ENCODE measurements at regions of chr14 and their contacts with region 1.

Region 1: DNA sequence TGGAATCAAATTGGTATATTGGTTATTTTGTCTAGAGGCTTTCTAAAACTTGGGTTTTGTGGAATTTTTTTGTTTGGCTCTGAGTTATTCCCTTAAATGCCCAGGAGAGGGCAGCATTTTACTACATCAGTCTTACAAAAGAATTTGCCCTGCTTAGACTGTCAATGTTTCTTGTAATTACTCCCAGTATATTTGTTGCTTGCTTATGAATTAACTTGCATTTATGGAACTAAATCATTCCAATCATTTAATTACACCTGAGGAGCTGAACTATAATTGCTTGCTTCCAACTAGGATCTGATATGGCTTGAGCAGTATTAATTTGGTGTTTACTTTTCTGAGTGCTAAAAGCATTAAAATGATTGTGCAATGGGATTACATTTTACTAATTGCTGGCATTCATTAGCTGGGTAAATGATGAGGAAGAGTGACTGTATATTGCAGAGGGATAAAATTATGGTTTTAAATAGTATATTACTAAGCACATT is 48.7 kb downstream of the MIPOL1 start:
- DNase-seq: peak; percentile 63
- ATAC-seq: peak; percentile 68
- H3K4me3 ChIP-seq: no peak overlapping the region
- H3K27ac ChIP-seq: no peak overlapping the region
- H3K4me1 ChIP-seq: no peaks in the 10 kb centered on the region
- H3K27me3 ChIP-seq: no peaks in the 10 kb centered on the region
- CTCF ChIP-seq: peak; percentile 83
- POLR2A ChIP-seq: 0 out of 2 replicates have a peak, but pooled peaks have one; percentile 16
- RAD21 ChIP-seq: peak; percentile 84

Region 2: DNA sequence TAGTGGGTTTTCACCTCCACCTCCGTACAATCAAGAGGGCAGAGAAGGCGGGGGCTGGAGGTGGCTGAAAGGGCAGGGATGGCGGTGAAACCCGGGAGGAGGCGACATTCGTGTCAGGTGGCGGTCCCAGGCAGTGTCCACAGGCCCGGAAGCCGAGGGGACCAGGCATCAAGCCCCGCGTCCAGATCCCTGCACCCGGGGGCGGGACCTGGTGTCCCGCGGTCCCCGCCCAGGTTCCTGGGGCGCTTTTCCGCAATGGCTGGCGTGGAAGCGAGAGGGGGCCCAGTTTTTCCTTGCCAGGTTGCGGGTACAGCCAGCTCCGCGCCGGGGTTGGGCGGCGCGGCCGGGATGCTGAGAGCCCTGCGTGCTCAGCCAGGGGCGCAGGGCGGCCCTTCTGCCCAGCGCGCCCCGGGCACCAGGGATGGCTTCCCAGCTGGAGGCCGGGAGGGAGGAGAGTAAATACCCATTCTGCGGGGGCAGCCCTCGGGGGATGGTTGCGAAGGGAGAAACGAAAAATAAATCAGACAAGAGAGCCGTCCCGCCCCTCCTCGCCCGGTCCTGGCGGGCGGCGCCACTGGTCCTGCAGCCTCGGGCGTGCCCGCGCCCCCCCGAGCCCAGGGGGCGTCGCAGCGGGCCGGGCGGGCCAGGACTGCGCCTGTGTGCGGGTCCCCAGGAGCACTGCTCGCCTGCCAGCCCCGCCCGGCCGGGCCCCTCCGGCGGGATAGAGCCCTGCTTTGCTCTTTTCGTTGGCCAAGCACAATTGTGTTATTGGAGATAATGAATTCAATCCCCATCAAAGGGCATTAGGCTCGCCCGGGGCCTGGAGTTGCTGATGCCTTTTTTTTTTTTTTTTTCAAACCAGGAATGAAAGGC is 337.1 kb after region 1 on chr14:
- CTCF ChIA-PET with region 1: no interaction called
- POLR2A ChIA-PET with region 1: no interaction called
- dilution Hi-C with region 1: no loop called
- in situ Hi-C with region 1: loop called (anchors 10 kb)
- intact Hi-C with region 1: no loop called
- DNase-seq: no peak
- ATAC-seq: peak; percentile 55
- H3K4me3 ChIP-seq: peak overlapping the region; percentile 10; the same call in 1 of the 2 replicates
- H3K27ac ChIP-seq: no peak overlapping the region
- H3K4me1 ChIP-seq: peaks cover 3% of the 10 kb centered on the region; the same call in 1 of the 2 replicates
- H3K27me3 ChIP-seq: peaks cover 64% of the 10 kb centered on the region
- CTCF ChIP-seq: no peak
- POLR2A ChIP-seq: no peak
- RAD21 ChIP-seq: no peak

Region 3: GRCh38 chr14:37588946-37589714 is 342.7 kb after region 1 on chr14:
- CTCF ChIA-PET with region 1: interaction called, 3 read pairs
- POLR2A ChIA-PET with region 1: interaction called, 11 read pairs
- dilution Hi-C with region 1: no loop called
- in situ Hi-C with region 1: loop called (anchors 10 kb)
- intact Hi-C with region 1: loop called (anchors 1 kb)
- DNase-seq: no peak
- ATAC-seq: no peak
- H3K4me3 ChIP-seq: no peak overlapping the region
- H3K27ac ChIP-seq: no peak overlapping the region
- H3K4me1 ChIP-seq: no peaks in the 10 kb centered on the region; the same call in 1 of the 2 replicates
- H3K27me3 ChIP-seq: peaks cover 86% of the 10 kb centered on the region
- CTCF ChIP-seq: no peak
- POLR2A ChIP-seq: no peak
- RAD21 ChIP-seq: no peak

Region 4: GRCh38 chr14:37594238-37594914 is 347.9 kb after region 1 on chr14:
- CTCF ChIA-PET with region 1: interaction called, 8 read pairs
- POLR2A ChIA-PET with region 1: interaction called, 11 read pairs
- dilution Hi-C with region 1: no loop called
- in situ Hi-C with region 1: loop called (anchors 10 kb)
- intact Hi-C with region 1: loop called (anchors 1 kb)
- DNase-seq: peak; percentile 80
- ATAC-seq: peak; percentile 74
- H3K4me3 ChIP-seq: peak overlapping the region; percentile 69
- H3K27ac ChIP-seq: no peak overlapping the region
- H3K4me1 ChIP-seq: peaks cover 3% of the 10 kb centered on the region; the same call in 1 of the 2 replicates
- H3K27me3 ChIP-seq: peaks cover 76% of the 10 kb centered on the region
- CTCF ChIP-seq: peak; percentile 81
- POLR2A ChIP-seq: no peak
- RAD21 ChIP-seq: peak; percentile 64